Transverse colon (tissue), 4 donors: ENCODE measurements at regions of chr16 and their contacts with region 1.

Region 1: DNA sequence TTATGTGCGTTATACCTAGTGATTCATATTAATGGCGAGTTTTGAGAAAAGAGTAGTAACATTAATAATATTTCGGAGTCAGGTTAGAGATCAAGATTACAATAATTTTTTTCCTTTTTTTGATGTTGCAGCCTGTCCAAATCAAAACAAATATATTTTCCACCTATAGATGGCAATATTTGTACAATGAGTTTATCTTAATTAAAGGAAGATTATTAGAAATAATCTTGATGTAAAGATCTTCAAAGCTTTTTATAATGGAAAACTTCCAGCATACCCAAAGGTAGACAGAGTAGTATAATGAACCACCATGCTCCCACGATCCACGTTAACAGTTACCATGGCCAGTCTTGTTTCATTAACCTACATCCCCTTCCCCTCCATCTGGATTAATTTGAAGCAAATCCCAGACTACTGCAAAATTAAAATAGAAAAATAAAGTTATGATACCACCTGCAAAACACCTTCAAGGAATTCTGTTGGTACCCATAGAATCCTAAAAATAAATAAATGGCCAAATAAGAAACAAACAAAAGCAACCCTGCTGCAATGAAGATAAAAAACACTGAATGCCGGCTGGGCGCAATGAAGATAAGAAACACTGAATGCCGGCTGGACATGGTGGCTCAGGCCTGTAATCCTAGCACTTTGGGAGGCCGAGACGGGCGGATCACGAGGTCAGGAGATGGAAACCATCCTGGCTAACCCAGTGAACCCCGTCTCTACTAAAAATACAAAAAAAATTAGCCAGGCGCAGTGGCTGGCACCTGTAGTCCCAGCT is 46.5 kb upstream of the GINS3 start:
- DNase-seq: no peak
- H3K4me3 ChIP-seq: no peak overlapping the region
- H3K27ac ChIP-seq: no peak overlapping the region
- H3K4me1 ChIP-seq: no peaks in the 10 kb centered on the region
- H3K27me3 ChIP-seq: peaks cover 41% of the 10 kb centered on the region
- CTCF ChIP-seq: peak in 1 of 5 experiments; percentile 11
- EP300 ChIP-seq: no peak
- POLR2A ChIP-seq: no peak

Region 2: DNA sequence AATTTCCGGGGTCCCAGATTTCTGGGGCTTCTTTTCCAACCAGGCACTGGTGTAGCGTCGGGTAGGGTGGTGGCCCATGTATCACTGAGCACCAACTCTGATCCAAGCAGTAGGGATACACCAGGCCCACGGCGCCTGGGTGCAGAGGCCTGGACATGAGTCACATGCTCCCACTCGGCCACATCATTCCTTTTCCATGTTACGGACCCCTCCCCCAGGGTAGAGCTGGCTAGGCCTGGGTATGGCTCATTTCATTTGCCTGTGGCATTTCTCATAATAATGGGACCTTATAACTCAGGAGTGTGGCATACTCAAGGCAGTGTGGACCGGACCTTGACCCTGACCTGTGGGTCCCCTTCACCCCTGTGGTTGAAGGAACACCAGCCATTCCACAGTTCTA is 136.2 kb after region 1 on chr16:
- in situ Hi-C with region 1: loop called in 2 of 4 experiments (anchors 5 to 10 kb)
- intact Hi-C with region 1: no loop called
- DNase-seq: no peak
- H3K4me3 ChIP-seq: no peak overlapping the region
- H3K27ac ChIP-seq: no peak overlapping the region
- H3K4me1 ChIP-seq: no peaks in the 10 kb centered on the region
- H3K27me3 ChIP-seq: no peaks in the 10 kb centered on the region
- CTCF ChIP-seq: no peak
- EP300 ChIP-seq: no peak
- POLR2A ChIP-seq: no peak

Region 3: GRCh38 chr16:58487566-58488351 is 142.0 kb after region 1 on chr16:
- in situ Hi-C with region 1: loop called in 2 of 4 experiments (anchors 5 to 10 kb)
- intact Hi-C with region 1: no loop called
- DNase-seq: peak; percentile 79
- H3K4me3 ChIP-seq: no peak overlapping the region
- H3K27ac ChIP-seq: no peak overlapping the region
- H3K4me1 ChIP-seq: peaks cover 0 to 6% (median 4%) of the 10 kb centered on the region in 4 donors
- H3K27me3 ChIP-seq: no peaks in the 10 kb centered on the region
- CTCF ChIP-seq: peak; percentile 77 to 96 (median 91)
- EP300 ChIP-seq: no peak
- POLR2A ChIP-seq: no peak